ENCODE measurements at regions of chr12 and their contacts with region 1.

Region 1: GRCh38 chr12:110937104-110937641 is 16.8 kb upstream of the MYL2 start:
- DNase-seq: peak; percentile 54 to 77
- ATAC-seq: peak; percentile 36 to 71 (median 62)
- H3K4me3 ChIP-seq: peak overlapping the region; percentile 48
- H3K27ac ChIP-seq: no peak overlapping the region
- H3K4me1 ChIP-seq: peaks cover 3% of the 10 kb centered on the region
- H3K27me3 ChIP-seq: no peaks in the 10 kb centered on the region
- CTCF ChIP-seq: peak; percentile 90

Region 2: DNA sequence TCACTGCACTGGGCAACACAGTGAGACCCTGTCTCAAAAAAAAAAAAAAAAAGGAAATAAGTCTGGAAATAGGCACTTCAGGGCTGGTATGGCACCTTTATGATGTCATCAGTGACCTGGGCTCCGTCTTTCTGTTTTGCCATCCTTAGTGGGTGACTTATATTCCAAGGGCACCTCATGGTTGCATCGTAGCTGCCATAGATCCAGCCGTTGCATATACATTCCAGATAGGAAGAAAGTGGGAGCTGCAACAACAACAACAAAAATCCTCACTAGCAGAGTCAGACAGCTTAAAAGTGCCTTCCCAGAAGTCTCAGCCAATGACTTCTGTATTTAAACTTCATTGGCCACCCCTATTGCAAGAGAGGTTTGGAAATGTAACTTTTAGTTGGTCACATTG is 43.2 kb before region 1 on chr12:
- intact Hi-C with region 1: loop called in 1 of 2 experiments (anchors 2 kb)
- DNase-seq: no peak
- ATAC-seq: no peak
- H3K4me3 ChIP-seq: no peak overlapping the region
- H3K27ac ChIP-seq: no peak overlapping the region
- H3K4me1 ChIP-seq: no peaks in the 10 kb centered on the region
- H3K27me3 ChIP-seq: no peaks in the 10 kb centered on the region
- CTCF ChIP-seq: no peak

Region 3: DNA sequence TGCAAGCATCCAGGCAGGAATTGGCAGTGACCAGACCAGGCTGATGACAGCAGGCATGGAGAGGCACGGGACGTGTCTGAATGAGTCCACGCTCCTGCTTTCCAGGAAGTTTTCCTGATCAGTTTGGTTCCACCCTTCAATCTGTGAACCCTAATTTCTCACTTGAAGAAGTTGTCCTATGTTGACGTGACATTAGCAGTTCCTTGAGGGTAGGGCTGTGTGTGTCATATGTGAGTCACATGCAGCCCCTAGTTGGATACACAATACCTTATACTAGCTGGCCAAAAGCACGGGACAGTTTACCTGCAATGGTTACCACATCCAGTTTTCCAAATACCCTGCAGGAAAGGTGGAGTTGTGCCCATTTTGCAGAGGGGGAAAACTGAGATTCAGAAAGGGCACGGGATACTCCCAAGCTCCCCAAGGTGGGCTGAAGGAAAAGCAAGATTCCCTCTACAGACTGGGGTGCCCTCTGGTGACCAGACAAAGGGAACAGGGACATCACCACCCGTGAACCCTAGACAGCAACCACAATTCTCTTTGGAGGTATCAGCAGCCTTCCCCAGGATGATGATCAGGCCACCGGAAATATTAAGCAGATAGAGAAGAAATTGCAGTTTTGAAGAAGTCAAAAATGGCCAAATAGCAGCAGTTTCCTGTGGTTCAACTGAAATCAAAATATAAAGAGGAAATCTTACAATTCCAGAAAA is 237.2 kb after region 1 on chr12:
- intact Hi-C with region 1: loop called in 1 of 2 experiments (anchors 10 kb)
- DNase-seq: no peak
- ATAC-seq: peak in 1 of 4 donors; percentile 60
- H3K4me3 ChIP-seq: no peak overlapping the region
- H3K27ac ChIP-seq: no peak overlapping the region
- H3K4me1 ChIP-seq: no peaks in the 10 kb centered on the region
- H3K27me3 ChIP-seq: peaks cover 0 to 30% (median 4%) of the 10 kb centered on the region in 3 donors
- CTCF ChIP-seq: peak; percentile 18

Region 4: GRCh38 chr12:111298582-111299436 is 361.6 kb after region 1 on chr12:
- intact Hi-C with region 1: loop called (anchors 2 to 5 kb)
- DNase-seq: peak; percentile 25 to 65
- ATAC-seq: peak; percentile 53 to 80 (median 72)
- H3K4me3 ChIP-seq: no peak overlapping the region
- H3K27ac ChIP-seq: no peak overlapping the region
- H3K4me1 ChIP-seq: no peaks in the 10 kb centered on the region
- H3K27me3 ChIP-seq: peaks cover 0 to under 1% (median 0%) of the 10 kb centered on the region in 3 donors
- CTCF ChIP-seq: peak; percentile 69

Measured in psoas muscle (tissue), 8 donors.